Panc1 (cell line): ENCODE measurements at regions of chr6 and their contacts with region 1.

Region 1: GRCh38 chr6:149565527-149566409 is at the start of gene GINM1:
- DNase-seq: peak; percentile 85
- ATAC-seq: peak; percentile 94
- H3K4me3 ChIP-seq: peak within 1 kb of the TSS; percentile 83 to 92
- H3K27ac ChIP-seq: peak within 1 kb of the TSS; percentile 74; the same call in 1 of the 2 replicates
- H3K4me1 ChIP-seq: peaks cover 7% of the 10 kb centered on the region; the same call in 1 of the 2 replicates
- H3K27me3 ChIP-seq: no peaks in the 10 kb centered on the region
- CTCF ChIP-seq: peak; percentile 92
- total RNA-seq, gene GINM1: 31.7 TPM

Region 2: GRCh38 chr6:149482545-149483333 is 83.0 kb before region 1 on chr6:
- CTCF ChIA-PET with region 1: interaction called, 17 read pairs
- POLR2A ChIA-PET with region 1: no interaction called
- in situ Hi-C with region 1: no loop called
- intact Hi-C with region 1: no loop called
- DNase-seq: no peak
- ATAC-seq: no peak
- H3K4me3 ChIP-seq: no peak overlapping the region
- H3K27ac ChIP-seq: no peak overlapping the region
- H3K4me1 ChIP-seq: no peaks in the 10 kb centered on the region
- H3K27me3 ChIP-seq: no peaks in the 10 kb centered on the region
- CTCF ChIP-seq: no peak

Region 3: DNA sequence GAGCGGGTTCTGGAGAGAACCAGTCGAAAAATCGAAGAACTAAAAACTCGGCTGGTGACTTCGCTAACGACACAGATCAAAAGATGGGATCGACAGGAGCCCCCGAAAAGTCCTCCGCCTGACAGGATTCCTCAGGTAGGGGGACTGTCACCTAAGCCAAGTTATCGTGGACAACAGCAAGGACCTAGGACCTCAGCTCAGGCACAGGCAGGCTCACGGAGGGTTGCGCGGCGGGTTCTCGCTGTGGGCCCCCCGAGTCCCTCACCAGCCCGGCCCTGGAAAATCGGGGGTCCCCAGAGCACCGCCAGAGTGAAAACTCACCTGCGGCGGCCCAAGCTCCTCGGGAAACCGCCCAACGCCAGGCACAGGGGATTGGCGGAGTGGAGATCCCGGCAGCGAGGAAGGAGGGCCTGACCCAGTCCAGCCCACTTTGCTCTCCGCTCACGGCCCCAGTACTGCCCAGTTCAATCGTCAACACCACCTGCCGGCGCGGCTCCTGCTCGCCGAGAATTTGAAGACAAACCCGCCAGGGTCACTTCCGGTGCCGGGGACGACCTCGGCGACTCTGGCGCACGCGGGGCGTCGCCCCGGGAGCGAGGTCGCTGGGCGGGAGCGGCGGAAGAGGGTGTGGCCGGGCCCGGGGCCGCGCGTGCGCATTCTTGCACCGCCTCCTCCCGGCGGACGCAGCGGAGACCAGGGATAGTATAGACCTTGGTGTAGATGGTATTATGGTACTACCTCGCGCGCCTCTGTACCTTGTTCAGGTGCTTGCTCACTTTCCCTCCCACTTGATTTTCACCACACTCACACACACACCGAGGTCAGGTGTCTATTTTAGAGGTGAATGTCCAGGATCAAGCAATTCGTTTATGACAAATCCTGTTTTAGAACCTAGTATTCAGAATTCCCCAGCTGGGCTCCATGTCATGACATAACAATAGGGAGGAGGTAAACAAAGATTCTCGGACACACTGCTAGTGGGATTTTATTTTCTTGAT is 82.7 kb after region 1 on chr6 and contains the start of gene KATNA1:
- CTCF ChIA-PET with region 1: interaction called, 7 read pairs
- POLR2A ChIA-PET with region 1: interaction called, 3 read pairs
- in situ Hi-C with region 1: no loop called
- intact Hi-C with region 1: loop called (anchors 10 kb)
- DNase-seq: peak; percentile 72
- ATAC-seq: peak; percentile 96
- H3K4me3 ChIP-seq: peak within 1 kb of the TSS; percentile 82 to 92
- H3K27ac ChIP-seq: peak within 1 kb of the TSS; percentile 86
- H3K4me1 ChIP-seq: peaks cover 13% of the 10 kb centered on the region
- H3K27me3 ChIP-seq: no peaks in the 10 kb centered on the region
- CTCF ChIP-seq: no peak
- total RNA-seq, gene KATNA1: 19.7 TPM

Region 4: DNA sequence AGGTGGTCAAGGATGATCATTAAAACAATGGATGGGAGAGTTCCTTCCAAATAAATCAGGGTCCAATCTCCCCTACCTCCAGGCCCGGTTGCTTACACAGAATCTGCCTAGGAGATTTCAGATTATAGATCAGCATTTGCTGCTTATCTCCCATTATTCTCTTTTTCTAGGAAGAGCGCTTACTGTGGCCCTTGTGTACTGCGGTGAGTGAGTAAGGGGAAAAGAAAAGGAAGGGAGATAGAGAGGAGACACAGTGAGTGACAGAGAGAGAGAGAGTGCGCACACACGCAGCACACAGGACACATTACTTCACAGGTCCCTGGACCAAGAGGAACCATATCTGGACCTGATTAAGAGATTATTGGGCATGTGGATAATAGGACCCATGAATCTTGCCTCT is 145.9 kb after region 1 on chr6:
- CTCF ChIA-PET with region 1: no interaction called
- POLR2A ChIA-PET with region 1: no interaction called
- in situ Hi-C with region 1: no loop called
- intact Hi-C with region 1: no loop called
- DNase-seq: no peak
- ATAC-seq: no peak
- H3K4me3 ChIP-seq: no peak overlapping the region
- H3K27ac ChIP-seq: no peak overlapping the region
- H3K4me1 ChIP-seq: peaks cover 8% of the 10 kb centered on the region; the same call in 1 of the 2 replicates
- H3K27me3 ChIP-seq: no peaks in the 10 kb centered on the region
- CTCF ChIP-seq: no peak

Region 5: DNA sequence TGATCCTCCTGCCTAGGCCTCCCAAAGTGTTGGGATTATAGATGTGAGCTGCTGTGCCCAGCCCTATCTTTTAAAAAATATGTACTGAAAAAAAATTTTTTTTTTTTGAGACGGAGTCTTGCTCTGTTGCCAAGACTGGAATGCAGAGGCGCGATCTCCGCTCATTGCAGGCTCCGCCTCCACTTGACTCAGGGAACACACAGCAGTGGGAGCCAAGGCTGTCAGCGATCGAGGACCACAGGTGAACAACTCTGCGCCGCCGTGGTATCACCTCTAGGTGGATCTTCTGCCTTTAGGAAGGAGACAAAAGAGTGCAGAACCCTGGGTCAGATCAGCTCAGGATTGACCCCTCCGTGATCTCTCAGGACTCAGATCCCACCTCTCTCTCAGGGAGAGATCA is 318.4 kb after region 1 on chr6:
- CTCF ChIA-PET with region 1: no interaction called
- POLR2A ChIA-PET with region 1: interaction called, 17 read pairs
- in situ Hi-C with region 1: no loop called
- intact Hi-C with region 1: no loop called
- DNase-seq: no peak
- ATAC-seq: peak; percentile 71; the same call in 1 of the 2 replicates
- H3K4me3 ChIP-seq: no peak overlapping the region
- H3K27ac ChIP-seq: no peak overlapping the region
- H3K4me1 ChIP-seq: no peaks in the 10 kb centered on the region
- H3K27me3 ChIP-seq: no peaks in the 10 kb centered on the region
- CTCF ChIP-seq: no peak